Panc1 (cell line): ENCODE measurements at regions of chr10 and their contacts with region 1.

Region 1: DNA sequence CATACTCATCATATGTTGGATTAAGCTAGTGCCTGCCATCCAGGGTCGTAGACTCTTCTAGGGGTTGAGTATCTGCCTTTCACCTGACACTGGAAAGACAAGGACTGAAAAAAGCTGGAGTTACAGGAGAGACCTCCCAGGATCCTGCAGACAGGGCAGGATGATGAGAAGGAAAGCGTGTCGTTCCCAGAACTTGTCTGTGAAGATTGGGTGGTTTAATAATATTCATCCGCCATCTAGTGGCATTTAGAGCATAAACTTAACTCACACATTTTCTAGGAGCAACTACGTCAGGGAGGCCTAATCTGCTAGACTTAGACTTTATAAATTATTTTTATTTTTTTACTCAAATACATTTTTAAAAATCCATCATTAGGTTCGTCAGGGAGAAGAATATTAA is 59.6 kb downstream of the ADRB1 start:
- DNase-seq: peak; percentile 50
- ATAC-seq: peak; percentile 82
- H3K4me3 ChIP-seq: no peak overlapping the region
- H3K27ac ChIP-seq: no peak overlapping the region
- H3K4me1 ChIP-seq: peaks cover 17% of the 10 kb centered on the region
- H3K27me3 ChIP-seq: no peaks in the 10 kb centered on the region
- CTCF ChIP-seq: peak; percentile 79

Region 2: DNA sequence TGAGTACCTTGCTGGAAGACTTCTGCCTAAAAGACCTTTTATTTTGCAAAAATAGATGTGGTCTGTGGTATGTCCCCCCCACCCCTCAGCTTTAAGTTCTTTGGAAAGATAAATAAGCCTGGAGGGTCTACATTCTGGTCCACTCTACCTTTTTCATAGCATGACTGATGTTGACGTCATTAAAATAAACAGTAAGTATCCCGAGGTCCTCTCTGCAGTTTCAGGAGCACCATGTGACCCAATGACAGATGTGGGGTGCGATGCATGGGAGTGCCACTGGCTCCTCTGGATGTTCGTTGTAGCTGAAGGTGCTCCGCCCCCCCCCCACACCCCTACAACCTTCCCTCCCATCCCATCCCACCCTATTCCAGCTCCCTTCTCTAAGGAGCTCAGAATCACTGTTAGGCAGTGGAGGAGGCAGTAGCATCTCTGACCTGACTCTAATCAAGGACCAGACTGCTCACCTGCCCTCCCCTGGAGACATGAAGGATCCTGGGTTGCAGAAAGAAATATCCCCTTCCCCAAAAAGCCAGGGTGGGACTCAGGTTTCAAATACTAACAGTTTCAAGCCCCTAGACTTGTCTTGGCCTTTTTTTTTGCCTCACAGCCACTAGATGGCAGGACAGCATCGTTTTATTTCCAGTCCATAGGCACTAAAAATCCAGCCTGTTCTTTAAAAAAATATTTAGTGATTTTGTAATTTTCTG is 398.5 kb before region 1 on chr10:
- CTCF ChIA-PET with region 1: no interaction called
- POLR2A ChIA-PET with region 1: no interaction called
- in situ Hi-C with region 1: no loop called
- intact Hi-C with region 1: loop called (anchors 1 kb)
- DNase-seq: peak; percentile 12
- ATAC-seq: peak; percentile 81
- H3K4me3 ChIP-seq: no peak overlapping the region
- H3K27ac ChIP-seq: no peak overlapping the region
- H3K4me1 ChIP-seq: no peaks in the 10 kb centered on the region
- H3K27me3 ChIP-seq: no peaks in the 10 kb centered on the region
- CTCF ChIP-seq: peak; percentile 87

Region 3: DNA sequence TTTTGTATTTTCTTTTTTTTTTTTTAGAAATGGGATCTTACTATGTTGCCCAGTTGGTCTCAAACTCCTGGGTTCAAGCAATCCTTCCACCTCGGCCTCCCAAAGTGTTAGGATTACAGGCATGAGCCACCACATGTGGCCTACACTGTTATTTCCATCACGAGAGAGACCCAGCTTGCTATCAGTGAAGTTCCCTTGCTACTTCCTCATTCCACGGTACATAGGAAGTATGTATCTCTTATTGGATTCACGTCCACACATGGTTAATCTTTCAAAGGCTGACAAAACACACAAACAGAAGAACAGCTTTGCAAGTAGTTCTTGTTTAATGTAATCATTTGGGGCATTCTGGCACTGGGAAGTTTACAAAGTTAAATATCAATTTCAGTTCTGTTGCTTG is 300.3 kb before region 1 on chr10:
- CTCF ChIA-PET with region 1: interaction called, 4 read pairs
- POLR2A ChIA-PET with region 1: no interaction called
- in situ Hi-C with region 1: no loop called
- intact Hi-C with region 1: loop called (anchors 1 kb)
- DNase-seq: no peak
- ATAC-seq: no peak
- H3K4me3 ChIP-seq: no peak overlapping the region
- H3K27ac ChIP-seq: no peak overlapping the region
- H3K4me1 ChIP-seq: no peaks in the 10 kb centered on the region
- H3K27me3 ChIP-seq: peaks cover 5% of the 10 kb centered on the region; the same call in 1 of the 2 replicates
- CTCF ChIP-seq: no peak

Region 4: DNA sequence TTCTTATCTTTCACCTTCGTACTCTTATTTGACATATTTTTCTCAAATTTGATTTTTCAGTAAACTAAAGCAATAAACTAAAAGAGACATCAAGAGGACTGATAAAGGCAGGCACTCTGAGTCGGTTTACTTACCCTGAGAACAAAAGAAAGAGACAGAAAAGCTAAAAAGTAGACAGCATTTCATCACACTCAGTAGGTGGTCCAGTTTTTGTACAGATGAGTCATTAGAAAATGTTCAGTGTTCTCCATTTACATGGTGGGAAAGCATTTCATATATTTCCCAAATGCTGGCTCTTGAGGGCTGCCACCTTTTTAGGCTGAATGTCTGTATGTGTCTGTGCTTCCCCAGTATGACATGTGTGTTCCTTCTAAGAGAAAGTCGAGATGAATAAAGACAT is 196.1 kb before region 1 on chr10:
- CTCF ChIA-PET with region 1: no interaction called
- POLR2A ChIA-PET with region 1: no interaction called
- in situ Hi-C with region 1: no loop called
- intact Hi-C with region 1: loop called (anchors 5 kb)
- DNase-seq: no peak
- ATAC-seq: no peak
- H3K4me3 ChIP-seq: no peak overlapping the region
- H3K27ac ChIP-seq: no peak overlapping the region
- H3K4me1 ChIP-seq: no peaks in the 10 kb centered on the region
- H3K27me3 ChIP-seq: no peaks in the 10 kb centered on the region
- CTCF ChIP-seq: no peak

Region 5: DNA sequence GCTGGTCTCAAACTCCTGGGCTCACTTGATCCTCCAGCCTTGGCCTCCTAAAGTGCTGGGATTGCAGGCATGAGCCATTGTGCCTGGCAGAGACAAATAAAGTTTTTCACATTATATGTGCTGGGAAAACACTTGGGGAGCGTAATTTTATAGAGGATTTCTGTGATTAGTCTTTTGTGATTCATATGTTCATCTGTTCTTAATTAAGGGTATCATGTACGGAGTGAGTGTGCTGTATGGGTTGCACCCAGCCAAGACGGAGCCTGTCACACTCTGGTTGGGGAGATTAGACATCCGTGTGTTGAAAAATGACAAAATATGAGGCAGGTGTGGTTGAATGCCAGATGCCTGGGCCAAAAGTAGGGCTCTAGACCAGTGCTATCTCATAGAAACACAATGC is 49.3 kb before region 1 on chr10:
- CTCF ChIA-PET with region 1: interaction called, 13 read pairs
- POLR2A ChIA-PET with region 1: no interaction called
- in situ Hi-C with region 1: no loop called
- intact Hi-C with region 1: no loop called
- DNase-seq: no peak
- ATAC-seq: no peak
- H3K4me3 ChIP-seq: no peak overlapping the region
- H3K27ac ChIP-seq: no peak overlapping the region; the same call in 1 of the 2 replicates
- H3K4me1 ChIP-seq: peaks cover 24% of the 10 kb centered on the region
- H3K27me3 ChIP-seq: no peaks in the 10 kb centered on the region
- CTCF ChIP-seq: no peak